Sciatic nerve (tissue), 2 donors: ENCODE measurements at regions of chr15 and their contacts with region 1.

Region 1: DNA sequence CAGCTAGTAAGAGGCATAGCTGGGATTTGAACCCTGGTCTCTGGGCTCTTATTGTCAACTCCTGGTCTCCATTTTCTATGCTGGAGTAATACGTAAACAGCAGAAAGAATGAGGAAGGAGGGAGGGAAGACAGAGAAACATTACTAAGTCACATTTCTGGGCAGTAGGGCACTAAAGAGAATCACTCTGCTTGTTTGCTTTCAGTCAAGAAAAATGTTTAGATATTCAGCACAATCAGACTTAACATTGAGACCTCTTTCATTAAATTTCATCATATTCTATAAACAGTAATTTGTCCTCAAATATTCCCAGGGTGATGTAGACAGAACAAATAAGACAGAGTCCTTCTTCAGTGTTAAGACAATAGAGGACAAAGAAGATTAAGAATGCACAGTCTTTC is 67.7 kb upstream of the BNC1 start:
- DNase-seq: no peak
- ATAC-seq: no peak

Region 2: GRCh38 chr15:83739629-83740028 is 387.5 kb after region 1 on chr15:
- intact Hi-C with region 1: loop called (anchors 5 kb)
- DNase-seq: no peak
- ATAC-seq: no peak